ENCODE measurements at regions of chr5 and their contacts with region 1.

Region 1: DNA sequence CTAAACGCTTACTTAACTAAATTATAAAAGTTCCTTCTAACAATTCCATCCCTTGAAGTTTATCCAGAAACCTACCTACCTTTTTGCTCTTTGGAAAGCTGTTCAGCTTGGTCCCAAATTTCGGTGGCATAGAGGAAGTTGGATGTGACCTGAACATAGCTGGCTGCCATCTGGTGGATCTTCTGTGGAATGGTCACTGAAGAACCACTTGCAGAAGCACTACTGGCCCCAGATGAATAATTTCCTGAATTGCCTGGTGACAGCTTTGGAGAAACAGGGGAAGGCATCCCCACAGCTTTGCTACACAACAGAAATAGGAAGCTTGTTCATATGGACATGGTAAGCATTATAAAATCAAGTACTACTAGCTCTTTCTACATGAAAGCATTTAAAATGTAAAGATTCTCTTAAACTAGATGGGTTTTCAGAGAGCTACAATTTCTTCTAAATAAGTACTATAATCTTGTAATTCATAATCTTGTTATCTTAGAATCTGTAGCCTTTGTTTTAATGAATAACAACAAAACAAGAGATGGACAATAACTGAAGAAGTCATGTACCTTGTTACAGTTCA is 9.9 kb downstream of the LEAP2 start:
- DNase-seq: peak in 7 of 10 donors; percentile 48 to 72 (median 58)
- H3K4me3 ChIP-seq: no peak overlapping the region
- H3K27ac ChIP-seq: peak overlapping the region in 43 of 59 donors; percentile 2 to 84 (median 46)
- H3K27me3 ChIP-seq: no peaks in the 10 kb centered on the region
- CTCF ChIP-seq: peak; percentile 42 to 89 (median 76)

Region 2: DNA sequence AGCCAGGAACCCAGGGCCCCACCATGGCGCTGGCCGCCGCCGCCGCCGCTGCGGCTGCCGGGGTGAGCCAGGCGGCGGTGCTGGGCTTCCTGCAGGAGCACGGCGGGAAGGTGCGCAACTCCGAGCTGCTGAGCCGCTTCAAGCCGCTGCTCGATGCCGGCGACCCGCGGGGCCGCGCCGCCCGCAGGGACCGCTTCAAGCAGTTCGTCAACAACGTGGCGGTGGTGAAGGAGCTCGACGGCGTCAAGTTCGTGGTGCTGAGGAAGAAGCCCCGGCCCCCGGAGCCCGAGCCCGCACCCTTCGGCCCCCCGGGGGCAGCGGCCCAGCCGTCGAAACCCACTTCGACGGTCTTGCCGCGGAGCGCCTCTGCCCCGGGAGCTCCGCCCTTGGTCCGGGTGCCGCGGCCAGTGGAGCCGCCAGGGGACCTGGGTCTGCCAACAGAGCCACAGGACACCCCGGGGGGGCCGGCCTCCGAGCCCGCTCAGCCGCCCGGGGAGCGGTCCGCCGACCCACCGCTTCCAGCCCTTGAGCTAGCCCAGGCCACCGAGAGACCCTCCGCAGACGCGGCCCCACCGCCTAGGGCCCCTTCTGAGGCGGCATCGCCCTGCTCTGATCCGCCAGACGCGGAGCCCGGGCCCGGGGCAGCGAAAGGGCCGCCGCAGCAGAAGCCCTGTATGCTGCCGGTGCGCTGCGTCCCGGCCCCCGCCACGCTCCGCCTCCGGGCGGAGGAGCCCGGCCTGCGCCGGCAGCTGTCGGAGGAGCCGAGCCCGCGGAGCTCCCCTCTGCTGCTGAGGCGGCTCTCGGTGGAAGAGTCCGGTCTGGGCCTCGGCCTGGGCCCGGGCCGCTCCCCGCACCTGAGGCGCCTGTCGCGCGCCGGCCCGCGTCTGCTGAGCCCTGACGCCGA is 69.5 kb before region 1 on chr5:
- intact Hi-C with region 1: no loop called
- DNase-seq: peak in 6 of 10 donors; percentile 44 to 81 (median 70)
- H3K4me3 ChIP-seq: peak overlapping the region; percentile 45 to 78 (median 66)
- H3K27ac ChIP-seq: peak overlapping the region; percentile 23 to 100 (median 95)
- H3K27me3 ChIP-seq: peaks cover 0 to 4% (median 0%) of the 10 kb centered on the region in 45 donors
- CTCF ChIP-seq: peak in 15 of 56 donors; percentile 9 to 34 (median 21)

Region 3: DNA sequence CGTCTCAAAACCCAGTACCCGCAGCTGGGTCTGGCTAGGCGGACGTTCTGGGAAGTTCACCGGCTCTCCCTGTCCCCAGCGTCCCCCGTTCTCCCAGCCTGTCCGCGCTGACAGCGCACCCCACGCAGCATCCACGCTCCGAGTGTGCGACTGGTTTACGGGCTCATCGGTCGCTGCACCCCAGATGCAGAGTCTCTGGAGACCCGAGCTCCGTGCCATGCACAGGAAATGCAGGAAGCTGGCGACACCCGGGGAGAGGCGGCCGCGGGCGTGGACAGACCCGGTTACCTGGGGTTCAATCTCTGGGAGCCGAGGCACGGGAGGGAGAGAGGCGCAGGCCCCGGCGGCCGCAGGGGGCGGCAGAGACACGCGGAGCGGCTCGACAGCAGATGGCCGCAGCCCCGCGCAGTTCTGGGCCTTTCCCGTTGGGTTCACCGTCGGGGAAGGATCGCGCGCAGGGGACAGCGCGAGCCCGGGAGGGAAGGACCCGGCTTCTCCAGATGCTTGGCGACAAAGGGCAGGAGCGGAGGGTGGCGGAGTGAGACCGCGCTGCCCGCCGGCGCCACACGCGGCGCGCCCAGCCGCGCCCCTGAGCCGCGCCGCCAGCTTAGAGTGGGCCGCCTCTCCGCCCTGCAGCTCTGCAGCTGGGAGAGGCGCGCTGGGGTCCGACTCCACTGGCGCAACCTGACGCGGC is 53.5 kb before region 1 on chr5:
- intact Hi-C with region 1: loop called in 1 of 2 experiments (anchors 2 kb)
- DNase-seq: peak; percentile 68 to 86 (median 76)
- H3K4me3 ChIP-seq: peak overlapping the region; percentile 38 to 93 (median 81)
- H3K27ac ChIP-seq: peak overlapping the region; percentile 46 to 100 (median 95)
- H3K27me3 ChIP-seq: no peaks in the 10 kb centered on the region
- CTCF ChIP-seq: peak; percentile 50 to 95 (median 81)

Region 4: GRCh38 chr5:132947671-132948070 is 64.3 kb after region 1 on chr5:
- intact Hi-C with region 1: no loop called
- DNase-seq: no peak
- H3K4me3 ChIP-seq: no peak overlapping the region
- H3K27ac ChIP-seq: peak overlapping the region in 1 of 59 donors; percentile 14
- H3K27me3 ChIP-seq: no peaks in the 10 kb centered on the region
- CTCF ChIP-seq: no peak

Measured in dorsolateral prefrontal cortex (tissue), 120 donors.